AG04449 (cell line): ENCODE measurements at regions of chr22 and their contacts with region 1.

Region 1: GRCh38 chr22:48503876-48504275 is 1323.8 kb downstream of the BRD1 start:
- DNase-seq: no peak
- H3K4me3 ChIP-seq: no peak overlapping the region
- CTCF ChIP-seq: no peak

Region 2: GRCh38 chr22:48492366-48493320 is 11.2 kb before region 1 on chr22:
- CTCF ChIA-PET with region 1: interaction called, 18 read pairs
- POLR2A ChIA-PET with region 1: no interaction called
- DNase-seq: peak; percentile 23
- H3K4me3 ChIP-seq: no peak overlapping the region
- CTCF ChIP-seq: peak; percentile 88